ENCODE measurements at regions of chr20 and their contacts with region 1.

Region 1: GRCh38 chr20:19725814-19726525 is 32.1 kb upstream of the RIN2 start:
- DNase-seq: no peak
- ATAC-seq: no peak
- H3K4me3 ChIP-seq: no peak overlapping the region
- H3K27ac ChIP-seq: no peak overlapping the region
- H3K4me1 ChIP-seq: no peaks in the 10 kb centered on the region
- H3K27me3 ChIP-seq: no peaks in the 10 kb centered on the region
- CTCF ChIP-seq: no peak
- POLR2A ChIP-seq: no peak

Region 2: GRCh38 chr20:19713822-19714578 is 12.0 kb before region 1 on chr20:
- intact Hi-C with region 1: loop called in 1 of 10 experiments (anchors 1 kb)
- DNase-seq: no peak
- ATAC-seq: no peak
- H3K4me3 ChIP-seq: no peak overlapping the region
- H3K27ac ChIP-seq: no peak overlapping the region
- H3K4me1 ChIP-seq: peaks cover 0 to 8% (median 0%) of the 10 kb centered on the region in 12 donors
- H3K27me3 ChIP-seq: no peaks in the 10 kb centered on the region
- CTCF ChIP-seq: no peak
- POLR2A ChIP-seq: no peak

Measured in heart left ventricle (tissue), 16 donors.